ENCODE measurements at regions of chr12 and their contacts with region 1.

Region 1: GRCh38 chr12:116277393-116278278 is at the start of gene MED13L:
- DNase-seq: peak; percentile 94
- ATAC-seq: peak; percentile 77
- H3K4me3 ChIP-seq: peak within 1 kb of the TSS; percentile 95
- H3K27ac ChIP-seq: peak within 1 kb of the TSS; percentile 65
- H3K4me1 ChIP-seq: peaks cover 41% of the 10 kb centered on the region
- H3K27me3 ChIP-seq: no peaks in the 10 kb centered on the region
- CTCF ChIP-seq: 0 out of 2 replicates have a peak, but pooled peaks have one; percentile 13
- total RNA-seq, gene MED13L: 61.2 and 71.6 TPM in 2 replicates

Region 2: GRCh38 chr12:115998119-115998633 is 279.5 kb before region 1 on chr12:
- CTCF ChIA-PET with region 1: no interaction called
- POLR2A ChIA-PET with region 1: no interaction called
- intact Hi-C with region 1: loop called (anchors 1 kb)
- DNase-seq: peak; percentile 81
- ATAC-seq: peak; percentile 66
- H3K4me3 ChIP-seq: no peak overlapping the region
- H3K27ac ChIP-seq: no peak overlapping the region
- H3K4me1 ChIP-seq: peaks cover 17% of the 10 kb centered on the region
- H3K27me3 ChIP-seq: no peaks in the 10 kb centered on the region
- CTCF ChIP-seq: peak; percentile 97

Region 3: GRCh38 chr12:116236148-116236731 is 41.4 kb before region 1 on chr12:
- CTCF ChIA-PET with region 1: no interaction called
- POLR2A ChIA-PET with region 1: no interaction called
- intact Hi-C with region 1: loop called (anchors 2 kb)
- DNase-seq: peak; percentile 69
- ATAC-seq: peak; percentile 43
- H3K4me3 ChIP-seq: no peak overlapping the region
- H3K27ac ChIP-seq: no peak overlapping the region
- H3K4me1 ChIP-seq: peaks cover 16% of the 10 kb centered on the region
- H3K27me3 ChIP-seq: no peaks in the 10 kb centered on the region
- CTCF ChIP-seq: peak; percentile 91

Region 4: GRCh38 chr12:116406516-116406915 is 128.9 kb after region 1 on chr12:
- CTCF ChIA-PET with region 1: interaction called, 5 read pairs
- POLR2A ChIA-PET with region 1: no interaction called
- intact Hi-C with region 1: loop called (anchors 5 kb)
- DNase-seq: peak; percentile 99
- ATAC-seq: peak; percentile 97
- H3K4me3 ChIP-seq: no peak overlapping the region
- H3K27ac ChIP-seq: peak overlapping the region; percentile 74
- H3K4me1 ChIP-seq: peaks cover 25% of the 10 kb centered on the region
- H3K27me3 ChIP-seq: no peaks in the 10 kb centered on the region
- CTCF ChIP-seq: peak; percentile 50

Region 5: DNA sequence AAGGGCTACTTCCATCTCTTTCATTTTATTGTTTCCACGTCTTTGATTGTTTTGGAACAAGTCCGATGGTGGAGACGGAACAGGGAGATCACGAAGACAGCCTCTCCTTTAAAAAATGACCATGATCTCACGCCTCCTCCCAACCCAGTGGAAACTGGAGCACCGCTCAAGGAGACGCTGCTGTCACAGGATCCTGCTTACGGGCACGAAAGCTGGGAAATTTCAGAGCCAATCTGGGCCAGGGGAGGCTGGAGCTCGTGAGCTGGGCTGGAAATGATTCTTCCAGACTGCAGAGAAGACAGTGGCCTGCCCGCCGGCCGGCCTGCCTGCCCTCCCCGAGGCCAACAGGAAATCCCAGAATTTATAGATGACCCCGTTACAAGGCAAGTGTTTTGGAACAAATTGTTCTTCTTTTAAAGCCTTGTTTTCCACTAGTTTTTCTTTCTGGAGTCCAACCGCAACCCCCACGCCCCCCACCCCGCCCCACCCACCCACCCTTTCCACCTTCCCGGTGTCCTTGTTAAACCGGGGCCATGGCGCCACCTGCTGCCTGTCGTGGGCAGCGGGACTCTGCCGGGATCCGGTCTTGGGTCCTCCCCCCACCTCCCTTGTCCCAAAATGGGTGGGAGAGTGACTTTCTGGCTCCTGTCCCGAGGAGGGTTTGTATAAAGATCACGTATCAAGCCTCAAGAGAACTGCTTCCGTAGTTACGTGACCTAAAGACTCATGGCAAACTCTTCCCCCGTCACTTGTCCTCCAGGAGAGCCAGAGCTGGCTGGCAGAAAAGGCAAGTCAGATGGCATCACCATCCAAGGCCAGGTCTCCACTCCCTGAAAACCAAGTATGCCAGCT is 321.9 kb after region 1 on chr12:
- CTCF ChIA-PET with region 1: interaction called, 3 read pairs
- POLR2A ChIA-PET with region 1: no interaction called
- intact Hi-C with region 1: loop called (anchors 1 kb)
- DNase-seq: peak; percentile 91
- ATAC-seq: peak; percentile 84
- H3K4me3 ChIP-seq: peak overlapping the region; percentile 59
- H3K27ac ChIP-seq: peak overlapping the region; percentile 87
- H3K4me1 ChIP-seq: peaks cover 29% of the 10 kb centered on the region
- H3K27me3 ChIP-seq: no peaks in the 10 kb centered on the region
- CTCF ChIP-seq: peak; percentile 65